K562 (cell line): ENCODE measurements at regions of chr1 and their contacts with region 1.

Region 1: GRCh38 chr1:65554829-65555228 is 134.4 kb downstream of the LEPR start:
- DNase-seq: peak in 2 of 4 experiments; percentile 25 to 72
- ATAC-seq: peak; percentile 88
- H3K4me3 ChIP-seq: peak overlapping the region; percentile 24
- H3K27ac ChIP-seq: peak overlapping the region; percentile 84
- H3K4me1 ChIP-seq: peaks cover 10 to 21% of the 10 kb centered on the region in 2 experiments; a peak in 4 of 5 replicates
- H3K27me3 ChIP-seq: no peaks in the 10 kb centered on the region
- CTCF ChIP-seq: no peak
- EP300 ChIP-seq: no peak
- POLR2A ChIP-seq: no peak; the same call in none of the 2 replicates
- RAD21 ChIP-seq: no peak

Region 2: GRCh38 chr1:65393347-65393746 is 161.5 kb before region 1 on chr1:
- CTCF ChIA-PET with region 1: no interaction called
- POLR2A ChIA-PET with region 1: no interaction called
- in situ Hi-C with region 1: no loop called
- intact Hi-C with region 1: no loop called
- DNase-seq: peak in 2 of 4 experiments; percentile 13 to 29
- ATAC-seq: peak; percentile 29; the same call in 1 of the 3 replicates
- H3K4me3 ChIP-seq: no peak overlapping the region
- H3K27ac ChIP-seq: peak overlapping the region; percentile 25; the same call in 2 of the 3 replicates
- H3K4me1 ChIP-seq: no peaks in the 10 kb centered on the region
- H3K27me3 ChIP-seq: no peaks in the 10 kb centered on the region
- CTCF ChIP-seq: no peak
- EP300 ChIP-seq: no peak
- POLR2A ChIP-seq: no peak
- RAD21 ChIP-seq: no peak

Region 3: DNA sequence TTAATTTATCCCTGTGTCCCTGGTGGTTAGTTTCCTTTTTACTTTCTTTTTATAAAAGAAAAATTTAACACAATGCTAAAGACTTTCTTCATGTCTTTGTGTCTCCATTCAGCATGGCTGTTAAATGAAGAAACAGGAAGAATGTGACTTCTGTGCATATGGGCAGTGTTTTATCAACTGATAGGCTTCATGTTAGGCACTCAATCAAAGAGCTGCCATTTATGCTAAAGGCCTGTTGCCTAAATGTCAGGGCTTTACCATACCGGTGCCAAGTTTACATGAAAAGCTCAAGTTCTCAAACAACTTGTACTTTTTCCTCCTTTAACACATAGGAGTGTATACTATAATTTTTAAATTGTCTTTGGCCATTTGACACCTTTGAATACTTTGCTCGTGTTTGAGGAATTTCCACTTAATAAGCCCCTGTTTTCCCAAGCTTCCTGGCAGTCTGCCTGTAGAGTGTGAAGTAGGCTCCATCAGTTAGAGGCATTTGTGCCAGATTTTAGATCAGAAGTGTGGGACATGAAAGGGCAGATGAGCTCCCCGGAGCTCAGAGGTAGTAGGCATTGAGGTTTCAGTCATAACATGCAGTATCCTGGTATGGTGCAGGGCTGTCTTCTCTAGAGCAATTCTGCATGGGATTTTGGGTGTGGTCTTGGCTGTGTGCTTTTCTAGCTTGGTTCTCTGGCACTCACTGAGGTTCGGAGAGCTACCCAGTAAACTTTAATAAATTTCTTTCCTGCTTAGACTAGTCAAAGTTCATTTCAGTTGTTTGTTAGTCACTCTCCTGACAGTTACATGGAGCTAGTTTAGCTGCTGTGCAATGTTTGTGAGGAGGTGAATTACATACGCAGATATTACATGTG is 15.3 kb before region 1 on chr1:
- CTCF ChIA-PET with region 1: no interaction called
- POLR2A ChIA-PET with region 1: interaction called, 10 read pairs
- in situ Hi-C with region 1: no loop called
- intact Hi-C with region 1: no loop called
- DNase-seq: peak in 1 of 4 experiments; percentile 52
- ATAC-seq: peak; percentile 74
- H3K4me3 ChIP-seq: no peak overlapping the region
- H3K27ac ChIP-seq: peak overlapping the region; percentile 82
- H3K4me1 ChIP-seq: peaks cover 10 to 27% of the 10 kb centered on the region in 2 experiments
- H3K27me3 ChIP-seq: no peaks in the 10 kb centered on the region
- CTCF ChIP-seq: no peak
- EP300 ChIP-seq: no peak
- POLR2A ChIP-seq: no peak
- RAD21 ChIP-seq: no peak